A549 (cell line): ENCODE measurements at regions of chr10 and their contacts with region 1.

Region 1: DNA sequence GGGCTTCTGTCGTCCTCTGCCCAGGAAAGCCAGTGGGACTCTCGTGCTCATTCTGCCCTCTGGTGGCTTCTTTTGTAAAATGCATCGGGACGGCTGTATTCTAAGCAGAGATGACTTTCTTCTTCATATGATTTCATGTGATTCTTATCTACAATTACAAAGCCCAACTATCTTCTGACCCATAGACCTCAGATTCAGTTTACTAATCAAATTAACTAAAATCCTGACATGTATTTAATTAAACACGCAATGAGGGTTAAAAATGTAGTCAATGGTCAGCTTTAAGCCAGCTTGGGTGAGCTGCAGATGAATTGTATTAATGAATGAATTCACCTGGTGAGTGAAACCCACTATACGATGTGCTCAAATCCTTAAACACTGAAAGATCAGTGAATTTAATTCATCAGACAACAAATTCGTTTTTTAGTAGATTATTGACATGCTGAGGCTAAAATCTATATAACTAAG is 117.6 kb upstream of the FAM204A start:
- DNase-seq: peak; percentile 61 to 65
- ATAC-seq: peak; percentile 87 to 98
- H3K4me3 ChIP-seq: no peak overlapping the region
- H3K27ac ChIP-seq: no peak overlapping the region
- H3K4me1 ChIP-seq: no peaks in the 10 kb centered on the region
- CTCF ChIP-seq: peak; percentile 76
- EP300 ChIP-seq: no peak
- POLR2A ChIP-seq: no peak
- RAD21 ChIP-seq: peak; percentile 70 to 75

Region 2: GRCh38 chr10:117431160-117431559 is 1028.6 kb before region 1 on chr10:
- CTCF ChIA-PET with region 1: interaction called, 10 read pairs
- POLR2A ChIA-PET with region 1: no interaction called
- DNase-seq: peak; percentile 21 to 53
- ATAC-seq: peak; percentile 70 to 80
- H3K4me3 ChIP-seq: no peak overlapping the region
- H3K27ac ChIP-seq: no peak overlapping the region
- H3K4me1 ChIP-seq: peaks cover 6% of the 10 kb centered on the region; the same call in 1 of the 3 replicates
- CTCF ChIP-seq: peak; percentile 53
- EP300 ChIP-seq: no peak
- POLR2A ChIP-seq: no peak
- RAD21 ChIP-seq: peak; percentile 61 to 66

Region 3: DNA sequence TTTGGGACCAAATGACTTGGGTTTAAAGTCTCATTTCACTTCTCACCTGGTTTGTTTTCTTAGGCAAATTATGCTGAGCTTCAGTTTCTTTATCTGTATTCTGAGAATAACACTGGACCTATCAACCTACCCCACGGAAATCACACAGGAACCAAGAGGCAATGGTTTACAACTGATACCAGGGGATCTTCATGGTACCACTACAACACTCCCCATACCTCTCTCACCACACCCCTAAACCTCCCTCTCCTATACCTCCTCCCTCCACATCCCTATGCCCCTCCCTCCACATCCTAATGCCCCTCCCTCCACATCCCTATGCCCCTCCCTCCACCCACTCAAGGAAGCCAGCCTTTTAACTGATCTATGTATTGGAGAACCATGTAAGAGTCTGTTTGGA is 127.5 kb before region 1 on chr10:
- CTCF ChIA-PET with region 1: no interaction called
- POLR2A ChIA-PET with region 1: no interaction called
- DNase-seq: peak in 1 of 2 experiments; percentile 7
- ATAC-seq: peak; percentile 47 to 78; a peak in 4 of 6 replicates
- H3K4me3 ChIP-seq: no peak overlapping the region
- H3K27ac ChIP-seq: no peak overlapping the region
- H3K4me1 ChIP-seq: no peaks in the 10 kb centered on the region
- CTCF ChIP-seq: no peak
- EP300 ChIP-seq: no peak
- POLR2A ChIP-seq: no peak
- RAD21 ChIP-seq: no peak

Region 4: GRCh38 chr10:118405928-118406327 is 53.8 kb before region 1 on chr10:
- CTCF ChIA-PET with region 1: no interaction called
- POLR2A ChIA-PET with region 1: no interaction called
- DNase-seq: no peak
- ATAC-seq: no peak
- H3K4me3 ChIP-seq: no peak overlapping the region
- H3K27ac ChIP-seq: no peak overlapping the region
- H3K4me1 ChIP-seq: no peaks in the 10 kb centered on the region
- CTCF ChIP-seq: no peak
- EP300 ChIP-seq: no peak
- POLR2A ChIP-seq: no peak
- RAD21 ChIP-seq: no peak

Region 5: GRCh38 chr10:118447478-118448270 is 12.1 kb before region 1 on chr10:
- CTCF ChIA-PET with region 1: interaction called, 34 read pairs
- POLR2A ChIA-PET with region 1: no interaction called
- DNase-seq: no peak
- ATAC-seq: no peak
- H3K4me3 ChIP-seq: no peak overlapping the region
- H3K27ac ChIP-seq: no peak overlapping the region
- H3K4me1 ChIP-seq: no peaks in the 10 kb centered on the region
- CTCF ChIP-seq: no peak
- EP300 ChIP-seq: no peak
- POLR2A ChIP-seq: no peak
- RAD21 ChIP-seq: no peak

Region 6: DNA sequence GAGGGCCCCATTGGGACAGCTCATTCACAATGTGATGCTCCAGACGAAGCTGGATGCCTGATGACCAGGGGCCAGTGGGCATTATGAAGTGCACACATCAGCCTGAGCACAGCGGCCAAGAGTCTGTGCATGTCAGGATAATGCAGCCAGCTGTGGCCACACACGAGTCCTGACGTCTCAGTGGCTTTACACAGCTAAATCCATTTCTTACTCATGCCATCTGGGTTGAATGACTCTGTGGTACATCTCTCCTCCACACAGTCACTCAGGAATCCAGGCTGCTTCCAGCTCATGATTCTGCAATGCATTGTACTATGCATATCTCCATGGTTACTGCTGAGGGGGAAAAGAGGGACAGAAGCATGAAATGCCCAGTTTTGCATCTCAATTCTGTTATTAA is 12.1 kb after region 1 on chr10:
- CTCF ChIA-PET with region 1: interaction called, 11 read pairs
- POLR2A ChIA-PET with region 1: no interaction called
- DNase-seq: peak in 1 of 2 experiments; percentile 9
- ATAC-seq: peak in 1 of 2 experiments; percentile 54; a peak in 3 of 6 replicates
- H3K4me3 ChIP-seq: no peak overlapping the region
- H3K27ac ChIP-seq: no peak overlapping the region
- H3K4me1 ChIP-seq: no peaks in the 10 kb centered on the region
- CTCF ChIP-seq: no peak
- EP300 ChIP-seq: no peak
- POLR2A ChIP-seq: no peak
- RAD21 ChIP-seq: no peak

Region 7: DNA sequence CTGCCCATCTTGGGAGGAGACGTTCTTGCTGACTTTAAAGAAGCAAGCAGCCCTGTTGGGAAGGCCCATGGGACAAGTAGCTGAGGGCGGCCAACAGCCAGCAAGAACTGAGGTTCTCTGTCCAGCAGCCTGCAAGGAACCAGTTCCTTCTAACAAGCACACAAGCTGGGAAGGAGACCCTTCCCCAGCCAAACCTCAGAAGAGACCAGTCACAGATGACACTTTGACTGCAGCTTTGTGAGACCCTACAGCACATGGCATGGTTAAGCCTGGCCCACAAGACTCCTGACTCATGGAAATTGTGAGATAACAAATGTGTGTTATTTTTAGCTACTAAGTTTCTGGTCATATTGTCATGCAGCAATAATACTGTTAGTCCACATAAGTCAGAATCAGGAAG is 35.7 kb after region 1 on chr10:
- CTCF ChIA-PET with region 1: interaction called, 15 read pairs
- POLR2A ChIA-PET with region 1: no interaction called
- DNase-seq: no peak
- ATAC-seq: no peak
- H3K4me3 ChIP-seq: no peak overlapping the region
- H3K27ac ChIP-seq: no peak overlapping the region
- H3K4me1 ChIP-seq: no peaks in the 10 kb centered on the region
- CTCF ChIP-seq: no peak
- EP300 ChIP-seq: no peak
- POLR2A ChIP-seq: no peak
- RAD21 ChIP-seq: no peak

Region 8: DNA sequence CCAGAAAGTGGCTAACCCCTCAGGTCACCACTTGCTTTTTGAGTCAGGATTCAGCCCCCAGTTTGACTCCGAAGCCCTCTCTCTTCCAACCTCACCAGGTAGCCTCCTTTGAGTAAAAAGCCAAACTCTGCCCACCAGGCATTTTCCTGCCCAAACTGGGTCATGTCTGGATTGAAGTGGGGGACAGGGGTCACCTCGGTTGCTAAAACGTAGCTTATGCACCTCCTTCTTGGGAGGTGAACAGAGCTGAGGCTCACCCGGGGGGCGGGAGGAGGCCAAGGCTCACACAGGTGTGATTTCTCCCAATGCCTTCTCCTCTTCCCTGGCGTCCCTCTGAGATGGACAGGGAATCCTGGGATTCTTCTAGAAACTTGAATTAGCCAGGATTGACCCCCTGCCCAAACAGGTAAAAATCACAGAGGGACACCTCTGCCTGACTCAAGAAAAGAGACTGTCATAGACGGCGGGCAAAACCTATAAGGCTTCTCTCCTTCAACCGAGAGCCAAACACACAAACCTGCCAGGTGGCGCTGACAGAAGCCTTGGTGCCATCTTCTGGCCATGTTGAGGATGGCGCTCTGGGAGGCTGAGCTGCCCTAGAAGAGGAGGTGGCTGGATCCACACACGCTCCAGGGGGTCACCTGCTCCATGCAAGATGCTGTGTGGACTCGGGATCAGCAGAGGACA is 84.1 kb after region 1 on chr10:
- CTCF ChIA-PET with region 1: interaction called, 13 read pairs
- POLR2A ChIA-PET with region 1: no interaction called
- DNase-seq: peak; percentile 57 to 69
- ATAC-seq: peak; percentile 94 to 98
- H3K4me3 ChIP-seq: no peak overlapping the region
- H3K27ac ChIP-seq: no peak overlapping the region
- H3K4me1 ChIP-seq: no peaks in the 10 kb centered on the region
- CTCF ChIP-seq: peak; percentile 63
- EP300 ChIP-seq: no peak
- POLR2A ChIP-seq: no peak
- RAD21 ChIP-seq: peak; percentile 63 to 70

Region 9: GRCh38 chr10:118775478-118775877 is 315.7 kb after region 1 on chr10:
- CTCF ChIA-PET with region 1: no interaction called
- POLR2A ChIA-PET with region 1: no interaction called
- DNase-seq: no peak
- ATAC-seq: no peak
- H3K4me3 ChIP-seq: no peak overlapping the region
- H3K27ac ChIP-seq: no peak overlapping the region
- H3K4me1 ChIP-seq: no peaks in the 10 kb centered on the region
- CTCF ChIP-seq: no peak
- EP300 ChIP-seq: no peak
- POLR2A ChIP-seq: no peak
- RAD21 ChIP-seq: no peak